Posterior vena cava (tissue), 2 donors: ENCODE measurements at regions of chr14 and their contacts with region 1.

Region 1: DNA sequence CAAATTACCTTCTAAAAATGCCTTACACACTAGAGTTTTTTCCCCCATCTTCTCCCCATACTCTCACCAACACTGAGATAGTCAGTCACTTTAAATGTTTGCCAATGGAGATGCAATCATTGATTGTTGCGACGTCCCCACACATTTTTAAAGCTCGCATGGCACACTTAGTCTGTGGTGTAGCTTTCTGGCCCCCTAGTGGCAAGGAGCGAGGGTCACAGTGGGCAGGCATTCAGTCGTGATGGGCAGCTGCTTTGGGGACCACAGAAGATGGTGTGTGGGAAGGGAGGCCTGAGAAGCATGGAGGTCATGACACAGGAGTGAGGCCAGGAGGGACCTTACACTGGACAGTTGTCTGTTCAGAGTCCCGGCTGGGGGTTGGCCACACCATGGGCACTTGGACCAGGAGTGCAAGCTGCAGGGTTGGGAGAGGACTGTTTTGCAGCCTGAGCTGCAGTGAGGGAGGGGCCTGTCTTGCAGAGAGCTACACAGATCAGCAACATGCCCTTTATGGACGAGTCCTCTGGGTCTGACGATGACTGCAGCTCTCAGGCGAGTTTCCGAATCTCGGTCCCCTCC is 28.7 kb downstream of the PIGH start:
- DNase-seq: peak; percentile 86

Region 2: DNA sequence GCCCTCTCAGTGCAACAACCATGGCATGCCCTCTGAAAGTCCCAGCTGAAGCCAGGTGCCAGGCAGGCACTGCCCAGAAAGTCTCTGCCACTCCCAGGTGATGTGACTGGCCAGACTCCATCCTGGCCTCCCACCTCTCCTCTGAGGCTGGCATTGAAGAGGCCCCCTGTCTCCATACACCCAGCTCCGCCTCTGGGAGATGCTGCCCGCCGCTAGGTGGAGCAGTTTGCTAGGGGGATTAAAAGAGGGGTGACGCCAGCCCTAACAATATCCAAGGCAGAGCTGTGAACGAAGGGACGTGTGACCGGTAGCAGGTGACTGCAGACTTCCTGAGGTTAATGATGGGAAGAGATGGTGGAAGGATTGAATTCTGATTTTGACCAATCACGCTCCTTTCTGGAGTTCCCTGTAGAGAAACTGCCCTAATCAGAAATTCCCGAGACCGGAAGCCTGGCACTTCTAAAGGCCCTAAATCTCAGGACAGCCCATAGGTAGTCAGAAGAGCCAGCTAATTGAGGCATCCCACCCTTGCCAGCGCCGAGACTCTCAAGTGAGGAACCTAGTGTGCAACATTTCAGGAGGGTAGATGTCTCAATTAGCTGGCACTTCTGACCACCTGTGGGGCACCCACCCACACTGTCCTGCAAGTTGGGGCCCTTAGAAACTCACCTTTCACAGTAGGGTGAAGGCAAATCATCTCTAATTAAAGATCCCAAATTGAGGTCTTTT is 151.1 kb before region 1 on chr14:
- intact Hi-C with region 1: loop called (anchors 1 to 5 kb)
- DNase-seq: peak; percentile 73

Region 3: GRCh38 chr14:67426983-67427606 is 144.3 kb before region 1 on chr14:
- intact Hi-C with region 1: loop called (anchors 5 kb)
- DNase-seq: peak; percentile 84

Region 4: GRCh38 chr14:67526676-67527459 is 44.5 kb before region 1 on chr14:
- intact Hi-C with region 1: loop called in 1 of 2 experiments (anchors 5 kb)
- DNase-seq: no peak

Region 5: DNA sequence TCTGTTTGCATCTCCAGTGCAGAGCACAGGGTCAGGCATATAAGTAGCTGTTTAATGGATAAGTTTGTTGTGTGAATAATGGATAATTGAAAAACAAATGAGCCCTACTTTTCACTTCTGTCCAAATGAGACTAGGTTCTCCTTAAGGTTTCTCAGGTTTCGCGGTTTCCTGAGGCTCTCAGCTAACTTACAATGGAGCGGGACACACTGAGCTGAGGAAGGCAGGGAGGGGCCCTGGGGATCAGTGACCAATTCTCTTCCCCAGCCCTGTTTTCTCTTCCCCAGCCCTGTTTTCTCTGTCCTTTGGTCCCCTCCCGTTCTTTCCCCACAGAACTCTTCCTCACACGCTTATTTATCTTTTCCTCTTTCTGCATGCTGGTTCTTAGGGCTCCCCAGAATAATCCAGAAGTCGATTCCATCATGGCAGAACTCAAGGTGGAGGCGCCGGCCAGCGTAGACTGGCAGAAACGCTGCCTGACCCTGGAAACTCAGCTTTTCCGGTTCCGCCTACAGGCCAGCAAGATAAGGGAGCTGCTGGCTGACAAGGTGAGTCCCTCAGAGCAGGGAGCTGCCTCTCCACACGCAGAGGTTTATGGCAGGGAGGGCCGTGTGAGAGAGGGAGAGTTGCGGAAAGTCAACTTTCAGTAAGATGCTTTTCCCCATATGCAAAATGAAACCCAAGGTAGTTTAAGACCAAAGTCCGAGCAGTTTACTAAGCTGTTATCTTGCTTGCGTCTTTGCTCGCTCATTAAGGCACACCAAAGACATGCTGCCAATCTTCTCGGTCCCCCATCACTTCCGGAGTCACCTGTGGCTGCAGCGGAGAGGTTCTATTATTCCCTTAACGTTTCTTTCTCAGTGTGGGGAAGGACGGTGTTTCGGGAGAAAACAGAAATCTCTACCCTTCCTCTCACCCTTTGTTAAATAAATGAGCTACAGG is 29.6 kb before region 1 on chr14:
- intact Hi-C with region 1: no loop called
- DNase-seq: no peak

Region 6: GRCh38 chr14:68719634-68720384 is 1148.4 kb after region 1 on chr14:
- intact Hi-C with region 1: loop called in 1 of 2 experiments (anchors 10 kb)
- DNase-seq: no peak